GM12878 (cell line): ENCODE measurements at regions of chr20 and their contacts with region 1.

Region 1: GRCh38 chr20:34334654-34335407 is 28.2 kb upstream of the ITCH start:
- DNase-seq: no peak
- ATAC-seq: no peak
- H3K4me3 ChIP-seq: no peak overlapping the region
- H3K27ac ChIP-seq: no peak overlapping the region
- H3K4me1 ChIP-seq: peaks cover 10% of the 10 kb centered on the region
- H3K27me3 ChIP-seq: no peaks in the 10 kb centered on the region
- CTCF ChIP-seq: no peak
- EP300 ChIP-seq: no peak
- POLR2A ChIP-seq: no peak
- RAD21 ChIP-seq: no peak

Region 2: GRCh38 chr20:34302723-34303528 is 31.9 kb before region 1 on chr20 and contains the start of gene AHCY:
- CTCF ChIA-PET with region 1: no interaction called
- POLR2A ChIA-PET with region 1: no interaction called
- RAD21 ChIA-PET with region 1: no interaction called
- SMC1A ChIA-PET with region 1: interaction called, 5 read pairs
- in situ Hi-C with region 1: no loop called
- intact Hi-C with region 1: loop called (anchors 2 kb)
- DNase-seq: peak; percentile 82
- ATAC-seq: peak; percentile 96
- H3K4me3 ChIP-seq: peak within 1 kb of the TSS; percentile 95
- H3K27ac ChIP-seq: peak within 1 kb of the TSS; percentile 87
- H3K4me1 ChIP-seq: peaks cover 11% of the 10 kb centered on the region
- H3K27me3 ChIP-seq: no peaks in the 10 kb centered on the region
- CTCF ChIP-seq: 0 out of 6 replicates have a peak, but pooled peaks of 1 of the 3 experiments have one; percentile 5
- EP300 ChIP-seq: no peak
- POLR2A ChIP-seq: peak; percentile 90
- RAD21 ChIP-seq: no peak
- polyA plus RNA-seq, gene AHCY: 84.9 to 116 TPM

Region 3: DNA sequence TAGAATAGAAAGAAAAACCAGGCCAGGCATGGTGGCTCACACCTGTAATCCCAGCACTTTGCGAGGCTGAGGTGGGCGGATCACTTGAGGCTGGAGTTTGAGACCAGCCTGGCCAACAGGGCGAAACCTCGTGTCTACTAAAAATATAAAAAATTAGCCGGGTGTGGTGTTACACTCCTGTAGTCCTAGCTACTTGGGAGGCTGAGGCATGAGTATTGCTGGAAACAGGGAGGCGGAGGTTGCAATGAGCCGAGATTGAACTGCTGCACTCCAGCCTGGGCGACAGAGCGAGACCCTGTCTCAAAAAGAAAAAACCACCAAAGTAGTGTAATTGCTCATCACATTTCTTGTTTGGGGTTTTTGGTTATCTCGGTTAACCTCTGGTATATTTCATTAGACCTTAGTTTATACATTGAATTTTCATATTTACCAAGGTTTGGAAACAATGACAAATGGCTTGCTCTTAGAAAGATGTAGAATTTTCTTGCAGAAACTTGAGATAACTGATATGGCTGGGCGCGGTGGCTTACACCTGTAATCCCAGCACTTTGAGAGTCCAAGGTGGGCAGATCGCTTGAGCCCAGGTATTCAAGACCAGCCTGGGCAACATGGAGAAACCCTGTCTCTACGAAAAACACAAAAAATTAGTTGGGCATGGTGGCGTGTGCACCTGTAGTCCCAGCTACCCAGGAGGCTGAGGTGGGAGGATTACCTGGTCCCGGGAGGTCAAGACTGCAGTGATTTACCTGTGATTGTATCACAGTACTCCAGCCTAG is 42.4 kb after region 1 on chr20:
- CTCF ChIA-PET with region 1: no interaction called
- POLR2A ChIA-PET with region 1: no interaction called
- RAD21 ChIA-PET with region 1: interaction called, 4 read pairs
- SMC1A ChIA-PET with region 1: interaction called, 3 read pairs
- in situ Hi-C with region 1: no loop called
- intact Hi-C with region 1: loop called (anchors 5 kb)
- DNase-seq: peak; percentile 72
- ATAC-seq: peak; percentile 96
- H3K4me3 ChIP-seq: no peak overlapping the region
- H3K27ac ChIP-seq: no peak overlapping the region
- H3K4me1 ChIP-seq: peaks cover 15% of the 10 kb centered on the region
- H3K27me3 ChIP-seq: no peaks in the 10 kb centered on the region
- CTCF ChIP-seq: no peak
- EP300 ChIP-seq: peak; percentile 30 to 40; a peak in 1 of 4 replicates
- POLR2A ChIP-seq: no peak
- RAD21 ChIP-seq: no peak